ENCODE measurements at regions of chr3 and their contacts with region 1.

Region 1: DNA sequence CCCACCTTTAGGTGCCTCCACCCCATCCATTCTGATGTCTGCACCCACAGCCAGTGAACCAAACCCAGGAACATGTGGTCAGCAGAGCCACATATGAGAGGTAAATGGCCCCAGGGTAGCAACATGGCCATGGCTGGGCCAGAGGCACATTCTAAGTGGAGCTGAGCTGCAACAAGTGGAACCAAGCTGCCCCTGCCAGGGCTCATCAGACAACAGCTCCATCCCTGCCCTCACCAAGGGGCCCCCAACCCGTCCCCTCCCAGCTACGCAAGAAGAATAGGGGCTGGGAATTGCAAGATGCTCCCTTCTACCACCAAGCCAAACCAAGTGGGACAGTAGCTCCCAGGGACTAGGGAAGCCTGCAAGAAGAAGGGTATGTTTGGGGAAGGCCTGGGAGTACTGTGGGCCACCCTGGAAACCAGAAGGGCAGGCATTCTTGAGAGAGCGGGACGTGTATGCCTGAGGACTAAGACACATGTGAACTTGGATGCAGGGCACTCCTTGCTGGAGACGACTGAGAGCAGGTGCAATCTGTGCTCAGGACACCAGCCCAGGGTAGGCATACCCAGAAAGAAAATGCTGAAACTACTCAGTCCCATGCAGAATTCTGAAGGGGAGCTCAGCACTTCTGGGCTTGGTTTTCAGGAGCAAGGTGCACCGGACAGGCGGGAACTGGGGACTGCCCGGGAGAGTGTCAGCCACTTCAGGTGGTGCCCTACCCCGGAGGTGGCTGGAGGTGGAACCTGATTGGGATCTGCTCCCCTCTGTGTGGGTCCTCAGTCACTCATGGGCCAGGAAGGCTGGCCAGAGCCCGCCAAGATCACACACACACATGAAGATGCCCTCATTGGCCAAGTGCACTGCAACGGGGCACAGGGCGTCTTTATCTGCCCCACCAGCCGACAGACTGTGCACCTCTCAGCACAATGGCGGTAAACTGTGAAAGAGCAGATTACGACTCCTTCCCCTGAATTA is 9.5 kb downstream of the MYL3 start:
- DNase-seq: no peak
- ATAC-seq: no peak
- H3K4me3 ChIP-seq: no peak overlapping the region
- H3K27ac ChIP-seq: no peak overlapping the region
- H3K4me1 ChIP-seq: no peaks in the 10 kb centered on the region
- H3K27me3 ChIP-seq: peaks cover 48% of the 10 kb centered on the region
- CTCF ChIP-seq: no peak
- POLR2A ChIP-seq: no peak
- RAD21 ChIP-seq: no peak

Region 2: DNA sequence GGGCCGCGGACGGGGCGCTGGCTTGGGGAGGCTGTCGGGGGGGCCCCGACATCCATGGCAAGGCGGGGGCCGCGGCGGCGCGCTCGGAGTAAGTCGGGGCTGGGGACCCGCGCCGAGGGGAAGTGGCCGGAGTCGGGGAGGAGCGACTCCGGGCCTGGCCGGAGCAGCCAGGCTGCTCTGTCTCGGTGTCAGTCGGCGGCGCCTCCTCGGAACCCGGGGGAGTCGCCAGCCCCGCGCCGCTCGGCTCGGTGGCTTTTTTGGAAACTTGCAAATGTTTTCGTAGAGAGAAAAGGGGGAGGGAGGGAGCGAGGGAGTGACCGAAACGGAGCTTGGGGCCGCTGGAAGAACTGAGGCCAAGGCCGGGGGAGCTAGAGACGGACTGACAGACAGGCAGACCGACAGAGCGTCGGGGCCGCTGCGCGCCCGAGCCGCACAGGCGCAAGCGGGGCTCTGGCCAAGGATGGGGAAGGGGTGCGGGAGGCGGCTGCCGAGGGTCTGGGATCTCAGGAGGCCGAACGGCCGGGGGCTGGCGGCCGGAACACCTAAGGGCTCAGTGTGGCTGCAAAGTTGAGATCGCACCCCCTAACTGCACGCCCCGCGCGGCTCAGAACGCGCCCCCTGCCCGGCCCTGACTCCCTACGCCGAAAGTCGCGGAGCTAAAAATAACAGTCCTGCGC is 28.8 kb after region 1 on chr3:
- CTCF ChIA-PET with region 1: no interaction called
- POLR2A ChIA-PET with region 1: no interaction called
- dilution Hi-C with region 1: no loop called
- in situ Hi-C with region 1: no loop called
- intact Hi-C with region 1: loop called (anchors 1 kb)
- DNase-seq: no peak
- ATAC-seq: peak; percentile 49
- H3K4me3 ChIP-seq: peak overlapping the region; percentile 51
- H3K27ac ChIP-seq: no peak overlapping the region
- H3K4me1 ChIP-seq: no peaks in the 10 kb centered on the region
- H3K27me3 ChIP-seq: peaks cover 62% of the 10 kb centered on the region
- CTCF ChIP-seq: no peak
- POLR2A ChIP-seq: no peak
- RAD21 ChIP-seq: no peak

Region 3: DNA sequence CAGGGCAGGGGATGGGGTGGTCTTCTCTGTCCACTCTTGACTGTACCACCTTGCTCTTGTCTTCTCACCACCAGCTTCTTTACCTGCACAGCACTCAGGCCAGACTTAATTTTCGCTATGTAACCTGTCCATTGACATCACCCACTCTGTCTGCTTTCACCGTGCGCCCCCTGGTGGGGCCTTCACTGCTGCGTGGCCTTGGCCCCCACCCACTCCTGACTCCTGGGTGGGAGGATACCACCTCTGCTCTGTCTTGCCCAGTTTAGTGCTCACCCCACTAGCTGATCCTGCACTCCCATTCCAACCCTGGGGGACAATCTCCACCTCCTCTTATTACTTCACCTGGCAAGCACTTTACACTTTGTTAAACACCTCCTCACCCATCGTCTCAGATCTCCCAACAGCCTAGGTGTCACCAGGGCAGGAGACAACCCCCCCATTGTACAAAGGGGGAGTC is 41.5 kb after region 1 on chr3:
- CTCF ChIA-PET with region 1: no interaction called
- POLR2A ChIA-PET with region 1: no interaction called
- dilution Hi-C with region 1: no loop called
- in situ Hi-C with region 1: no loop called
- intact Hi-C with region 1: no loop called
- DNase-seq: peak; percentile 34
- ATAC-seq: peak; percentile 52
- H3K4me3 ChIP-seq: no peak overlapping the region
- H3K27ac ChIP-seq: no peak overlapping the region
- H3K4me1 ChIP-seq: no peaks in the 10 kb centered on the region; the same call in 1 of the 2 replicates
- H3K27me3 ChIP-seq: peaks cover 29% of the 10 kb centered on the region
- CTCF ChIP-seq: peak; percentile 81
- POLR2A ChIP-seq: no peak
- RAD21 ChIP-seq: peak; percentile 80

Region 4: GRCh38 chr3:47746264-47746663 is 892.5 kb after region 1 on chr3:
- CTCF ChIA-PET with region 1: no interaction called
- POLR2A ChIA-PET with region 1: no interaction called
- dilution Hi-C with region 1: no loop called
- in situ Hi-C with region 1: no loop called
- intact Hi-C with region 1: no loop called
- DNase-seq: no peak
- ATAC-seq: no peak
- H3K4me3 ChIP-seq: no peak overlapping the region
- H3K27ac ChIP-seq: no peak overlapping the region
- H3K4me1 ChIP-seq: no peaks in the 10 kb centered on the region; the same call in 1 of the 2 replicates
- H3K27me3 ChIP-seq: no peaks in the 10 kb centered on the region
- CTCF ChIP-seq: no peak
- POLR2A ChIP-seq: no peak
- RAD21 ChIP-seq: no peak